ENCODE measurements at regions of chr5 and their contacts with region 1.

Region 1: DNA sequence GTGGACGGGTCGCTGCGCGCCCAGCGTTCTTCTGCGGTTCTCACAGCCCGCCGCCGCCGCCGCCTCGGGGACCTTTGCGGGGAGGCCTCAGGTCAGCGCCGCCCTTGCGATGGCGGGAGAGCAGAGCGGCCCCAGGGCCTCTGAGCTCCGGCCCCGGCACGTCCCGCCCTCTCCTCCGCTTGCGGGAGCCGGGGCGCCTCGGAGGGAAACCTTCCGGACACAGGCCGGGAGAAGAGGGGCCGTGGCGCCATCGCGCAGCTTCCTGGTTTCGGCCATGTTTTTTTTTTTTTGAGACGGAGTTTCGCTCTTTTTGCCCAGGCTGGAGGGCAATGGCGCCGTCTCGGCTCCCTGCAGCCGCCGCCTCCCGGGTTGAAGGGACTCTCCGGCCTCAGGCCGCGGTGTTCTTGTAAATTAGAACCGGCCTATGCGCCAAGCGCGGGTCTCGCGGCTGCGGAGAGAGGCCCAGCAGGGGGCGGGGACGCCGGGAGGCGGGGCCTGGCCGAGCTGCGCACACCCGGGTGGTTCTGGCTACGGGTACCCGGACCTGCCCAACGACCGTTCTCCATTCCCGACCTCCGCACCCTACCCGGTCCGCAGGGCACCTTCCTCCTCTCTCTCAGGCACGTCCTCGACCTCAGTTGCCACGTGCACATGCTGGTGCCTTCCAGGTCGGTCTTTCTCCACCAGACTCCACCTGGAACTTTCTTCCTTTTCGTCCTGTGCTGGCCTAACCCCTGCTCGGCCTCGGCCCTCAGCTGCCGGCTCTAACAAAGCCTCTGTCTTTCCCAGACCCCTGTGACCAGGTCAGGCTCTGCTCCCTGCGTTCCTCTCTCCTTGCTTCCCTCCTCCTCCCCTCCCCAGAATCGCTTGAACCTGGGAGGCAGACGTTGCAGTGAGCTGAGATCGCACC is 28.8 kb upstream of the MGAT1 start:
- DNase-seq: peak; percentile 80
- H3K4me3 Mint-ChIP-seq: peak overlapping the region; percentile 96
- H3K27ac Mint-ChIP-seq: peak overlapping the region; percentile 97
- H3K4me1 Mint-ChIP-seq: peaks cover 34% of the 10 kb centered on the region
- H3K27me3 Mint-ChIP-seq: no peaks in the 10 kb centered on the region

Region 2: GRCh38 chr5:180802325-180803180 is 28.8 kb before region 1 on chr5 and contains the start of gene MGAT1:
- CTCF ChIA-PET with region 1: interaction called, 31 read pairs
- POLR2A ChIA-PET with region 1: interaction called, 404 read pairs
- DNase-seq: peak; percentile 79
- H3K4me3 Mint-ChIP-seq: peak within 1 kb of the TSS; percentile 92
- H3K27ac Mint-ChIP-seq: peak within 1 kb of the TSS; percentile 97
- H3K4me1 Mint-ChIP-seq: peaks cover 82% of the 10 kb centered on the region
- H3K27me3 Mint-ChIP-seq: no peaks in the 10 kb centered on the region
- total RNA-seq, gene MGAT1: 184 to 185 TPM

Region 3: DNA sequence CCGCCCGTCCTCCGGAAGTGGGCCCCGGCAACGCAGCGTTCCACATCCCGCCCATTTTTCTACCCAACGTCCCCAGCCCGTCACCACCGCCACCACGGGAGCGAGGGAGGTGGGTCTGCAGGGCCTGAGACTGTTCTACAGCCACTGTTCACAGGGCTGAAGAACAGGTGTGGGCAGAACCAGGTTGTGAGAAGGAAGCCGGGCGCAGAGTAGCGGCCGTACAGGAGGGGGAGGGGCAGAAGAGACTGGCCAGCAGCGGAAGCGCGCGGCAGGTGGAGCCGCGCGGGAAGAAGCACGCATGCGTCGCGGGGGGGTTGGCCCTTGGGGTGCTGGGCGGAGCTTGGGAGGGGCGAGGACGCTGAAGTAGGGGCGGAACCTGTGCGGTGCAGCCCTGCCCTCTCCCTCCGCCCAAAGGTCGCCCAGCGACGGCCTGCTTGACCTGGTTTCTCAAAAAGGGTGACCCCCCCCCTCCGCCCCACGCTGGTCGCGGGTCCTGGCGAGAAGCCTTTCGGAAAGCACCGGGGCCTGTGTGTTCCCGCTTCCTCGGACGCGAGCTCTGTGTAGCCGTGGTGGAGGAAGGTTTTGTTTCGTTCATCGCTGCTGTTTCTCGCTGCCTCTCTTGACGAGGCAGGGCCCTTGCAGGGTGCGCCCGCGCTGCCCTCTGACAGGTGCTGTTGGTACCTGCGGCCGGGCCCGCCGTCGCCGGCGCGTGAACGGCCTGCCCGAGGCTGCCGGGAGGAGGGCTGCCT is 21.0 kb before region 1 on chr5:
- CTCF ChIA-PET with region 1: interaction called, 31 read pairs
- POLR2A ChIA-PET with region 1: interaction called, 404 read pairs
- DNase-seq: peak; percentile 95
- H3K4me3 Mint-ChIP-seq: peak overlapping the region; percentile 92
- H3K27ac Mint-ChIP-seq: peak overlapping the region; percentile 99
- H3K4me1 Mint-ChIP-seq: peaks cover 72% of the 10 kb centered on the region
- H3K27me3 Mint-ChIP-seq: no peaks in the 10 kb centered on the region

Region 4: GRCh38 chr5:180816608-180817534 is 14.5 kb before region 1 on chr5:
- CTCF ChIA-PET with region 1: interaction called, 18 read pairs
- POLR2A ChIA-PET with region 1: interaction called, 404 read pairs
- DNase-seq: no peak
- H3K4me3 Mint-ChIP-seq: no peak overlapping the region
- H3K27ac Mint-ChIP-seq: no peak overlapping the region
- H3K4me1 Mint-ChIP-seq: peaks cover 34% of the 10 kb centered on the region
- H3K27me3 Mint-ChIP-seq: peaks cover 9% of the 10 kb centered on the region

Region 5: GRCh38 chr5:180848878-180849277 is 17.5 kb after region 1 on chr5:
- CTCF ChIA-PET with region 1: no interaction called
- POLR2A ChIA-PET with region 1: interaction called, 22 read pairs
- DNase-seq: no peak
- H3K4me3 Mint-ChIP-seq: no peak overlapping the region
- H3K27ac Mint-ChIP-seq: no peak overlapping the region
- H3K4me1 Mint-ChIP-seq: no peaks in the 10 kb centered on the region
- H3K27me3 Mint-ChIP-seq: no peaks in the 10 kb centered on the region

Region 6: DNA sequence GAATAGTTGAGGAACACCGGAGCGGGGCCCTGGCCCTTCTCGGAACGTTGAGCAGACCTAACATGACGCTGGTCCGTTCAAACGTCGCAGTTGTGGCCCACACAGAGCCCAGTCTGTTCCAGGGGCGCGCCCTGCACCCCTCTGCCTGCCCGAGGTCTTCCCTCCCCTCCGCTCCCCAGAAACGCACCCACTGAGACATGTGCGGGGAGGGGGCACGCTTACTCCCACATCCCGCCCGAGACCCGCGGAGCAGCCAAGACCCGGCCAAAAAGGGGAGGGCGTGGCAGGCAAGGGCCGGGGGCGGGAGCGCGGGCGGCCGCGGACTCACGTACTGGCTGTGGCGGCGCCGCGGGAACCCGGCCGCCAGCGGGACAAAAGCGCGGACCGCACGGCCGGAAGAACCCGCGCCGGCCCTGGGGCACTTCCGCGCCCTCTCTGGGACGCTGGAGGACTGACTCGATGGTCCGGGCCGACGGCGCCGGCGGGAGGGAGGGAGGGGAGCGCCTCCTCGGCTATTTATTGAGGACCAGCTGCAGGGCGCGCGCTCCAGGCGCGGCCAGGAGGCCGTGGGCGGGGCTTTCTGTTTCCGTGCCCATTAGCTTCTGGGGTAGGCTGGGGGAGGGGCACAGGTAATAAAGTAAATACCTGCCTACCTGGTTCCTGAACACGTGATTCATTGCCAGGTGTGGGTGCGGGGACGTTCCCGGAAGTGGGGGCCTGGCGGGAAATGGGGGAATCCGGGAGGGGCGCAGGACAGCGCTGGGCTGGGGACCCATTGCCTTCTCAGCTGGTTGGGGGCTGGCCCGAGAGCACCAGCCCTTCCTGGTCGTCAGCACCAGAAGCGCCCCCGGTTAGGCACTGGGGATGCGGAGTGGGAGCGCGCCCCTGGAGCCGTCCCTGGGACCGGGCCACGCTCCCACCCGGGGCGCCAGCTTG is 29.8 kb after region 1 on chr5 and contains the start of gene ZFP62:
- CTCF ChIA-PET with region 1: interaction called, 20 read pairs
- POLR2A ChIA-PET with region 1: interaction called, 91 read pairs
- DNase-seq: peak; percentile 88
- H3K4me3 Mint-ChIP-seq: peak within 1 kb of the TSS; percentile 95
- H3K27ac Mint-ChIP-seq: peak within 1 kb of the TSS; percentile 95
- H3K4me1 Mint-ChIP-seq: peaks cover 16% of the 10 kb centered on the region
- H3K27me3 Mint-ChIP-seq: peaks cover 5% of the 10 kb centered on the region
- total RNA-seq, gene ZFP62: 19.4 to 20.0 TPM